Activated CD4-positive, alpha-beta memory T cell treated with anti-CD3 and anti-CD28 coated beads, Interleukin-2, amount 10 ng/mL, durations not matched to agents 7 days and 5 days (primary cell): ENCODE measurements at regions of chr6 and their contacts with region 1.

Region 1: GRCh38 chr6:27864906-27865849 is 47.0 kb downstream of the OR2B2 start:
- DNase-seq: peak; percentile 85
- H3K4me3 Mint-ChIP-seq: peak overlapping the region; percentile 81
- H3K27ac Mint-ChIP-seq: peak overlapping the region; percentile 99
- H3K4me1 Mint-ChIP-seq: peaks cover 61% of the 10 kb centered on the region
- H3K27me3 Mint-ChIP-seq: peaks cover 4% of the 10 kb centered on the region

Region 2: GRCh38 chr6:26054857-26055669 is 1810.1 kb before region 1 on chr6:
- CTCF ChIA-PET with region 1: no interaction called
- POLR2A ChIA-PET with region 1: interaction called, 10 read pairs
- DNase-seq: peak; percentile 92
- H3K4me3 Mint-ChIP-seq: peak overlapping the region; percentile 83
- H3K27ac Mint-ChIP-seq: peak overlapping the region; percentile 99
- H3K4me1 Mint-ChIP-seq: peaks cover 37% of the 10 kb centered on the region
- H3K27me3 Mint-ChIP-seq: no peaks in the 10 kb centered on the region

Region 3: DNA sequence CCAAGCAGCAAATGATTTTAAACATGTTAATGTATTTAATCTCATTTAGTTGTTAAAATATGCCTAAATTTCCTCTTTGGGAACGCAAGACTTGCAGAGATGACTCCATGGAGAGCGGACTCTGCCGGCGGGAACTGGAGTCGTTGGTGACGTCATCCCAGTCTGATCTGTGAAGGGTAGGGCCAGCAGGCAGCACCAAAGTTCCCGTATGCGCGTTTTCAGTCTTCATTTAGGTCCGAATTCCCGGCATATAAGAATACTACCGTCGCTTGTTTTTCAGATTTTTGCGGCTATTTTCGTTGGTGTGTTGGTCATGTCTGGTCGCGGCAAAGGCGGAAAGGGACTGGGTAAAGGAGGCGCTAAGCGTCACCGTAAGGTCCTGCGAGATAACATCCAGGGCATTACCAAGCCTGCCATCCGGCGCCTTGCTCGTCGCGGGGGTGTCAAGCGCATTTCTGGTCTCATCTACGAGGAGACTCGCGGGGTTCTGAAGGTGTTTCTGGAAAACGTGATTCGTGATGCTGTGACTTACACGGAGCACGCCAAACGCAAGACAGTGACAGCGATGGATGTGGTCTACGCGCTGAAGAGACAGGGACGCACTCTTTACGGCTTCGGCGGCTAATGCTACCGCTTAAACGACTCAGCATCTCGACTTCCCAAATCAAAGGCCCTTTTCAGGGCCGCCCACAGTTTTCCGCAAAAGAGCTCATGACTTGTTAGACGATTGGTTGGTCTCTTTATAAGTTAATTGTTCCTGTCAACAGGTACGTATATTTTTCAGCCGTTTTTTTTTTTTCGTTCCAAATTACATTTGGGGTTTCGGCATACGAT is 1660.6 kb before region 1 on chr6:
- CTCF ChIA-PET with region 1: no interaction called
- POLR2A ChIA-PET with region 1: interaction called, 59 read pairs
- DNase-seq: peak; percentile 90
- H3K4me3 Mint-ChIP-seq: no peak overlapping the region
- H3K27ac Mint-ChIP-seq: no peak overlapping the region
- H3K4me1 Mint-ChIP-seq: peaks cover 35% of the 10 kb centered on the region
- H3K27me3 Mint-ChIP-seq: no peaks in the 10 kb centered on the region

Region 4: DNA sequence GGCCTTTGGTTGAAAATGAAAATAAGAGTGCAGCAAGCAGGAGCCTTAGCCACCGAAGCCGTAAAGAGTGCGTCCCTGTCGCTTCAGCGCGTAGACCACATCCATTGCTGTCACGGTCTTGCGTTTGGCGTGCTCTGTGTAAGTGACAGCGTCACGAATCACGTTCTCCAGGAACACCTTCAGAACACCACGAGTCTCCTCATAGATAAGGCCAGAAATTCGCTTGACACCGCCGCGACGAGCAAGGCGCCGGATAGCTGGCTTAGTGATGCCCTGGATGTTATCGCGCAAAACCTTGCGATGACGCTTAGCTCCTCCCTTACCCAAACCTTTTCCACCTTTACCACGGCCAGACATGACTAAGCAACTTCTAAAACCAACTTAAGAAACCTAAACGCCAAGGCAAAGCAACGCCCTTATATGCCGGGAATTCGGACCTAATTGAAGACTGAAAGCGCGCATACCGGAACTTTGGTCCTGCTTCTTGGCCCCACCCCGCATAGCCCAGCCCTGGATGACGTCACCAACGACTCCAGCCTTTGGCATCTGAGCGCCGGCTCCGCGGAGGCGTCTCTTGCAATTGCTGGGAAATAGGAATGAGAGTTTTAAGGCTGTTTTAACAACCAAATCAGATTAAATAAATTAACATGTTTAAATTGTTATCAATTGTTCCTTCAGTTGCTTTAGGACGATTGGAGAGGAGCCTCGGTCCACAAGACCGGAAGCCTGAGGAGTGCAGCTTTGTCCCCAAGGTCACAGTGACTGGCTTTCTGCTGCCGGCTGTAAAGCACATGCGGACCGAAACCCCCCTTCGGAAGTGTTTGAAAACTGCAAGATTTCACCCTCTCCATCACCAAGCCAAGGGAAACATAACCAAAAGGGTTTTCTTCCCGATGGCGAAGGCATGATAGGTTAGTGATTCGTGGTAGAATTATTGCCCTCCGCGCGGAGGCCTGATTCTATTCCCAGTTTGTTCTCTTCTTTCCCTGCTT is 1579.7 kb before region 1 on chr6:
- CTCF ChIA-PET with region 1: no interaction called
- POLR2A ChIA-PET with region 1: interaction called, 14 read pairs
- DNase-seq: peak; percentile 98
- H3K4me3 Mint-ChIP-seq: peak overlapping the region; percentile 83
- H3K27ac Mint-ChIP-seq: peak overlapping the region; percentile 96
- H3K4me1 Mint-ChIP-seq: peaks cover 39% of the 10 kb centered on the region
- H3K27me3 Mint-ChIP-seq: peaks cover 4% of the 10 kb centered on the region

Region 5: DNA sequence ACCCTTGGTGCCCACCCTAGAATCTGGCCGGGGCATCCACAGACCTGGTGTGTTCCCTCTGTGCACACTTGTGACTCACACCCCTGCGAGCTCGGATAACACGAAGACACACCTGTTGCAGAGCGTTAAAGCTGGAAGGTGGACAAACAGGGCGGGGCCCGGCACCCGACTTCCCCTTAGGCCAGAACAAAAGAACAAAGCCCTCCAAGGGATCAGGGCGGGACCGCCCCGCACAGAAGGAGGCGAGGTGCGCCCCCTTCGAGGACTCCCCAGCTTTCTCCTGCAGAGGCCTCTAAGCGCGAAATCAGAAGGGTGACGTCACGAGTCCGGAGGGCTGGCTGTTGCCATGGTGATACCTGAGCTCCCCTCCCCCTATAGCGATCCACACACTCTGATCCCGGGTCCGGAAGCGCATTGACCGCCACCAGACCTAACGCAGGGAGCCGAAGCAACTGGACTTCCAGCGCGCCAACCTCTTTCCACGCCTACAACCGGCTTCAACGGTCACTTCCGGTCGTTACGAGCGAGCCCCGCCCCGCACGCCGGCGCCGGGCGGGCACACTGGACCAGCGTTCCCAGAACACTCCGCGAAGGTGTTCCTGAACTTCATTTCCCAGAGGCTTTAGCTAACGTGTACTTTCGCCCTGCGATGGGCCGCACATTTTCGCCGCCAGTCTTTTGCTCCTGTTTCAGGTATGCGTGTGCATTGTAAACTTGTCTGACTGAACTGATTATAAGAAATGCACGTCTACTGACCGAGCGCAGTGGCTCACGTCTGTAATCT is 392.4 kb before region 1 on chr6 and contains the start of gene ZNF184:
- CTCF ChIA-PET with region 1: no interaction called
- POLR2A ChIA-PET with region 1: interaction called, 12 read pairs
- DNase-seq: peak; percentile 90
- H3K4me3 Mint-ChIP-seq: peak within 1 kb of the TSS; percentile 85
- H3K27ac Mint-ChIP-seq: peak within 1 kb of the TSS; percentile 93
- H3K4me1 Mint-ChIP-seq: peaks cover 52% of the 10 kb centered on the region
- H3K27me3 Mint-ChIP-seq: peaks cover 4% of the 10 kb centered on the region
- total RNA-seq, gene ZNF184: 16.2 to 16.3 TPM

Region 6: DNA sequence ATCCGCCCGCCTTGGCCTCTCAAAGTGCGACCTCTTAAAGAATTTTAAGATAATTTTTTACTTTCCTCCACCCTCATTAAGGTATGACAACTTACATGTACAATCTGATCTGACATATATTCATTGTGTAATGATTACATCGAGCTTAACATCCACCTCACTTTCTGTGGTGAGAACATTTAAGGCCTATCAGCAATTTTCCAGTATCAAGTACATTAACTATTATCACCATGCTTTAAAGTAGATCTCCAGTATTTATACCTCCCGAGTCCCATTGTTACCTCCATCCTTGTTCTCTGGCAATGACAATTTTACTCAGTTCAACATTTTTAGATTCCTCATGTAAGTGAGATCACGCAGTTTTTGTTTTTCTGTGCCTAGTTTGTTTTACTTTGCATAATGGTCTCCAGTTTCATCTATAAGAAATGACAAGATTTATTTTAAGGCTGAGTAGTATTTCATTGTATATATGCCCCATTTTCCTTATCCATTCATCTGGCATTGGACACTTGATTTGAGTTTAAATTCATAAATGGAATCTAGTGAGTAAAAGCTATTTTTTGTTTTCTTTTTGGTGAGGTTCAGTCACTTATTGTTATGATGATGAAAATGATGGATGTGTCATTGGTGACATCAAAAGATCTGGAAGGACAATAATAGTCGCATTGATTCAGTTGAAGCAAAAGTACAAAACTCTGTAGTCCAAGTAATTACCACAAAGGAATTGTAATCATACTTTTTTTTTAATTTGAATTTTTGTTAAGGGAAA is 40.0 kb before region 1 on chr6:
- CTCF ChIA-PET with region 1: interaction called, 166 read pairs
- POLR2A ChIA-PET with region 1: interaction called, 2,396 read pairs
- DNase-seq: no peak
- H3K4me3 Mint-ChIP-seq: peak overlapping the region; percentile 82
- H3K27ac Mint-ChIP-seq: peak overlapping the region; percentile 99
- H3K4me1 Mint-ChIP-seq: peaks cover 51% of the 10 kb centered on the region
- H3K27me3 Mint-ChIP-seq: no peaks in the 10 kb centered on the region

Region 7: GRCh38 chr6:27931209-27931608 is 66.0 kb after region 1 on chr6:
- CTCF ChIA-PET with region 1: no interaction called
- POLR2A ChIA-PET with region 1: no interaction called
- DNase-seq: no peak
- H3K4me3 Mint-ChIP-seq: no peak overlapping the region
- H3K27ac Mint-ChIP-seq: no peak overlapping the region
- H3K4me1 Mint-ChIP-seq: no peaks in the 10 kb centered on the region
- H3K27me3 Mint-ChIP-seq: peaks cover 18% of the 10 kb centered on the region

Region 8: GRCh38 chr6:28235912-28236452 is 370.8 kb after region 1 on chr6:
- CTCF ChIA-PET with region 1: no interaction called
- POLR2A ChIA-PET with region 1: no interaction called
- DNase-seq: no peak
- H3K4me3 Mint-ChIP-seq: no peak overlapping the region
- H3K27ac Mint-ChIP-seq: no peak overlapping the region
- H3K4me1 Mint-ChIP-seq: no peaks in the 10 kb centered on the region
- H3K27me3 Mint-ChIP-seq: no peaks in the 10 kb centered on the region

Region 9: DNA sequence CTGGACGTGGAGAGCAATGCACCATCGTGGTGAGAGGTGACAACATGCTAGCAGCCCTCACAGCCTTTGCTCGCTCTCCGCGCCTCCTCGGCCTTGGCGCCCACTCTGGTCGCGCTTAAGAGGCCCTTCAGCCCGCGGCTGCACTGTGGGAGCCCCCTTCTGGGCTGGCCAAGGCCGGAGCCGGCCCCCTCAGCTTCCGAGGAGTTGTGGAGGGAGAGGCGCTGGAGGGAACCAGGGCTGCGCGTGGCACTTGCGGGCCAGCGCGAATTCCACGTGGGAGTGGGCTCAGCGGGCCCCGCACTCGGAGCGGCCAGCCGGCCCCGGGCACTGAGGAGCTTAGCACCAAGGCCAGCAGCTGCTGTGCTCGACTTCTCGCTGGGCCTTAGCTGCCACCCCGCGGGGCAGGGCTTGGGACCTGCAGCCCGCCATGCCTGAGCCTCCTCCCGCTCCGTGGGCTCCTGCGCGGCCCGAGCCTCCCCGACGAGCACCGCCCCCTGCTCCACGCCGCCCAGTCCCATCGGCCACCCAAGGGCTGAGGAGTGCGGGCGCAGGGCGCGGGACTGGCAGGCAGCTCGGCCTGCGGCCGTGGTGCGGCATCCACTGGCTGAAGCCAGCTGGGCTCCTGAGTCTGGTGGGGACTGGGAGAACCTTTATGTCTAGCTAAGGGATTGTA is 646.6 kb after region 1 on chr6:
- CTCF ChIA-PET with region 1: no interaction called
- POLR2A ChIA-PET with region 1: no interaction called
- DNase-seq: no peak
- H3K4me3 Mint-ChIP-seq: no peak overlapping the region
- H3K27ac Mint-ChIP-seq: no peak overlapping the region
- H3K4me1 Mint-ChIP-seq: peaks cover 10% of the 10 kb centered on the region
- H3K27me3 Mint-ChIP-seq: peaks cover 10% of the 10 kb centered on the region

Region 10: GRCh38 chr6:28863604-28864320 is 998.6 kb after region 1 on chr6:
- CTCF ChIA-PET with region 1: no interaction called
- POLR2A ChIA-PET with region 1: interaction called, 18 read pairs
- DNase-seq: peak; percentile 85
- H3K4me3 Mint-ChIP-seq: peak overlapping the region; percentile 81
- H3K27ac Mint-ChIP-seq: peak overlapping the region; percentile 76
- H3K4me1 Mint-ChIP-seq: peaks cover 46% of the 10 kb centered on the region
- H3K27me3 Mint-ChIP-seq: peaks cover 12% of the 10 kb centered on the region